ENCODE measurements at regions of chr3 and their contacts with region 1.

Region 1: DNA sequence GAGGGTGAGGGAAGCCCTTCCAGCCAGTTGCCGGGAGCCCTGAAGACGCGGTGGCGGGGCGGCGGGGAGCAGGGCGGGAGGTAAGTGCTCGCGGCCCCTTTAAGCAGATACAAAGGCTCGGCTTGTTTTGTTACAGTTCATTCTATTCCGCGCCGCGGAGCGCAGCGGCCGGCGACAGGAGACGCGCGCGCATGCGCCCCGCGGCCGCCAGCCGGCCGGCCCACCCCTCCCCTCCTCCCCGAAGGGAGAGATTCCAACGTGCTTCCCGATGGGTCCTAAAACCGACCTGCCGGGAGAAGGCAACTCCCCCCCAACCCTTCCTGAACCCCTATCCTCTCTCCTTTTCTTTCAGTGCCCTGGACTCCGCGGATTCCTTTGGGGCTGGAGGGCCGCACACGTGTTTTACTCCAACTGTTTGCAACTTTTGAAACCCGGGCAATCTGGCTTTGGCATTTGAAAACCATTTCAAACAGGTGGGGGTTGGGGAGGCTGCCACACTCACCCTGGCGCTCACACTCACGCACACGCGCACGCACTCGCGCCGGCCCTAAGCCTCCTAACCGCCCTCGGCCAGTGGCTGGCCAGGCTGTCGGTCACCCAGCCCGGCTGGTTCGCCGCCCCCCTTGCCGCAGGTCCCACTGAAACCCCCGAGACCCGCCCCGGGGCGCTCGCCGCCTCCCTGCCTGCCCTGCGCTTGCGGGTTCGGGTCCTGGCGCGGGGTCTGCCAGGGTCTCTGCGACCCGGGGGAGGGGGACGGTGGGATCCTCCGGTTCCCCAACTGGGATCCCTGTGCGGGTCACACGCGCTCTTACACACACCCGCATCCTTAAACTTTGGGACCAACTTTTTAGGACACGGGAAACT is at the start of gene MAGI1:
- DNase-seq: peak; percentile 91
- ATAC-seq: peak; percentile 93
- total RNA-seq, gene MAGI1: 34.1 TPM

Region 2: GRCh38 chr3:64739971-64740631 is 1298.9 kb before region 1 on chr3:
- intact Hi-C with region 1: no loop called
- DNase-seq: no peak
- ATAC-seq: no peak

Region 3: DNA sequence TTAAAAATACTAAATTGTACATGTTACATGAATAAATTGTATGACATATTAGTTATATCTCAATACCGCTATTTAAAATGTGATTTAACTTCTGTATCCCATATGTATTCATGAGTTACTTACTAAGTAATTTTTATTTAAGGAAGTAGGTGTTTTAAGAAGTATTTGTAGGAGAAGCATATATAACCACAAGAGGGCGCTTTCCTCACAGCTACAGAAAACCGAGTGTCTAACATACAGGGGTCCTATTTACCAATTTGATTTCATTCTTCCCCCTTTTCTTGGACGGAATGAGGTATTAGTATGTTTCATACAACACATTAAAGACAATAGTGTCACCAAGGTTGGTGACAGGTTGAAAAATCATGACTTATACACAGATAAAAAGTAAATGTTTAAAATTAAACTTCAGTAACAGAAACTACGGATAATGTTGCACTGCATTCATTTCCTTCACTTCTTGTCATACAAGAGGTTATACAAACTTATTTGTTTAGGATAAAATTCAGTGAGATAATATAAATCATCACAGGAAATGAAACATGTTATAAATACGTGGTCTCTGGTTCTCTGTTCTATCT is 253.8 kb before region 1 on chr3:
- intact Hi-C with region 1: loop called (anchors 5 kb)
- DNase-seq: no peak
- ATAC-seq: peak; percentile 59

Region 4: GRCh38 chr3:65953301-65953812 is 85.6 kb before region 1 on chr3:
- intact Hi-C with region 1: loop called (anchors 5 kb)
- DNase-seq: no peak
- ATAC-seq: peak; percentile 64

Region 5: GRCh38 chr3:65992106-65992505 is 46.9 kb before region 1 on chr3:
- intact Hi-C with region 1: loop called (anchors 5 kb)
- DNase-seq: no peak
- ATAC-seq: no peak

Region 6: DNA sequence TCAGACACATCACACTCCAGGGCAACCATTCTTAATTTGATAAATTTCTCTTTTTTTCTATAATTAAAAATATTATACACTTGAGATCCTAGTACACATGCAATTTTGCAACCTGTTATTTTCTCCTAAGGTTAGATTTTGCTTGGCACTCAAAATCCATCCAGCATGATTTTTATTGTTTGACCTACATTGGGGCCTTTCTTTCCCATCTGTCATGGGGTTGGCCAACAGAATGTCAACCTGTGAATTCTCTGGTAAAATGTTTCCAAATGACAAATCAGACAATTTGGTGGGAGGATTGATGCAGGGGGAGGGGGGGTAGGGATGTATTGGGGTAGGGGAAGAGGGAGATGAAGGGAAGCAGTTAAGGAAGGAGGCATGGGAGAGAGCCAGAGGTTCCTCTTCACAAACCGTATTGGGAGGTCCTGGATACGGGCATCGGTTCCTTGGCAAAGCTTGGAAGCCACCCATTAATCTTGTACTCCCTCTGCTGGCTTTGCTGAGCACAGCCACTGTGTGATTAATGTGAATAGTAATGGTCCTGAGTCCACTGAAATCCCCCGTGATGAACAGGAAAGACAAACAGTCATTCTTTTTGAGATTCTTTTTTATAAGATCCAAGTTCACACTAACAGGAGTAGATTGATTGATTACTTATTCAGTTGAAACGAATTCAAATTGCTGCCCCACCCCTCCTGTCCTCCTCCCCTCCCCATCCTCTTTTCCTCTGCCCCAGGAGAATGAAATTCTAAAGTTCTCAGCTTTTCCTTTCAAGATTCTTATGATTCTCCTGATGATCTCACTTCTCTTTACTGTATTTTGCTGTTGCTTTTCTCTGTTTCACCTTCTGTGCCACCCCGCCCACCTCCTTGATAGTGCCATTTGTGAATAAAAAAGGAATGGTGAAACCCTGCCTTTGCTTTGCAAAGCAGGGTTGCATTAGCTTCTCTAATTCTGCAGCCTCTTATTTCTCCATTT is 99.7 kb after region 1 on chr3:
- intact Hi-C with region 1: loop called (anchors 5 kb)
- DNase-seq: peak; percentile 46
- ATAC-seq: peak; percentile 92